ENCODE measurements at regions of chr9 and their contacts with region 1.

Region 1: DNA sequence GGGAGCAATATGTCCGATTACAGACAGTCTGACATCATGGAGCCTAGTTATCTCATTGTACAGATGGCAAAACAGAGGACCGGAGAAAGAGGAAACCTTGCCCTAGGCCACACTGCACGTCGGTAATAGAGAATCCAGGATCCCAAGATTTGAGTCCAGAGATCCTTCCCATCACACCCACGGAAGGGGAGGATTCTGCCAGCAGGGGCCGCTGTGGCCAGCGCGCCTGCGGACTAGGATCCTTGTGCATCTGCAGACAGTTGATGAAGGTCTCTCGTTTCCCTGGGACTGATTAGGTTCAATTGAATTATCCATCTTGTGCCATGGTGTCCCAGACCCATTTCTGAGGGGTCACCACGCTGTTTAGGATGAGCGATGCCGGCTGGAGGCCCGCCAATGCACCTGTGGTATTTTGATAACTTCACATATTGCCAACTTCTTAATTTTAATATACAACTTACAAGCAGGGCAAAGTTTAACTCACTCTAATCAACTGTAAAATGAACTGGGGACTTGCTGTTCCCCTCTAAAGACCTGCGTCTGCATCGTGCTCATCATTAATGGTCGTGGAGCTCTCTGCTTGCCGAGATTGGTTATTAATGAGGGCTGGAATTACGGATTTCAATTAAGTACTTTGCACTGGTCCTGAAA is 592.7 kb upstream of the BRINP1 start:
- DNase-seq: no peak
- H3K4me3 ChIP-seq: no peak overlapping the region
- CTCF ChIP-seq: peak; percentile 80

Region 2: DNA sequence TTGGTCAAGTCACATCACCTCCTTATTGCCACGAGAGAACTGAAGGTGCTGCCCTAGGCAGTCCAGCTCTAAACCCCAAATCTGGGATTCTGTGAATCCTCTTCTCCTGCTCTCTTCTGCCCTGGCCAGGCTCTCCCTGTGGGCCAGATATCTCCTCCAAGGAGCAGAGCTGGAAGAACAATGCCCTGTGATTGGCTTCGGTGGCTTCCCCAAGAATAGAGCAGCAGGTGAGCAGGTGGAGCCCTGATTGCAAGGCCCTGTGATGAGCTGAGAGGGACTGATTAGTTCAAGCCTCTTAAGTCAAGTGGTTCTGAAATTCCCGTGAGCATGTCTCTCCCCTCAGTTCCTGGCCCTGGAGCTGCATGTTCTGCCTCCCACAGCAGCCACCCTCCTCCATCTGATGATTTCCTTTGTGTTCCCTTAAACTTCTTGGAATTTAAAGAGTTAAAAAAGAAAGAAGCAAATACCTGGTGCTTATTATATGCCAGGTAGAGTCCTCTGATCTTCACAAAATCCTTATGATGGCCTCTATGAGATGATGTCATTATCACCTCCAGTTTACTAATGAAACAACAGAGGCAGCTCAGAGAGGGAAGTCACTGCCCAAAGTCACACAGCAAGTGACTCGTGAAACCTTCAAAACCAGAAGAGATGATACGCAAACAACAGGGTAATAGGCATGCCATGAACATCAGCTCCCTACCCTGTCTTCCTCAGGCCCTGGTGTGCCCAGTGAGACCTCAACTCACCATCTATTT is 417.2 kb before region 1 on chr9:
- CTCF ChIA-PET with region 1: no interaction called
- POLR2A ChIA-PET with region 1: no interaction called
- DNase-seq: no peak
- H3K4me3 ChIP-seq: no peak overlapping the region
- CTCF ChIP-seq: no peak

Region 3: DNA sequence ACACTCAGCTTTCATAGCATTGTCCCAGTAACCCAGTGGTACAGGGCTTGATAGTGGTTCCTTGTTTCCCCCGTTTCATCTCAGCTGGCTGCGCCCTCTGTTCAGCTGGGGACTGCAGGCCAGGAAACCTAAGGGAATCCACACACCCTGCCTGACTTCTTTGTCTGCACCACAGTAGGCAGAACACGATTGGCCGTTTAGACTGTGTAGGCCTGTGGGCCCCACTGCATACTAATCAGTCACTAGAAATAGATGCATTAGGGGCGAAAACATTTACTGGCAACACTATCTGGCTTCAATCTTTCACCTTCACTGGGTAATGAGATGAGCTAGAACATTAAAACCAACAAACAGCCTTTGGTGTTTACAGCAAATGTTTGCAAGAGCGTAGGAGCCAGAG is 80.0 kb before region 1 on chr9:
- CTCF ChIA-PET with region 1: no interaction called
- POLR2A ChIA-PET with region 1: no interaction called
- DNase-seq: no peak
- H3K4me3 ChIP-seq: no peak overlapping the region
- CTCF ChIP-seq: no peak

Region 4: GRCh38 chr9:119951090-119951489 is 10.8 kb before region 1 on chr9:
- CTCF ChIA-PET with region 1: interaction called, 22 read pairs
- POLR2A ChIA-PET with region 1: interaction called, 7 read pairs
- DNase-seq: peak; percentile 95
- H3K4me3 ChIP-seq: no peak overlapping the region
- CTCF ChIP-seq: no peak

Region 5: DNA sequence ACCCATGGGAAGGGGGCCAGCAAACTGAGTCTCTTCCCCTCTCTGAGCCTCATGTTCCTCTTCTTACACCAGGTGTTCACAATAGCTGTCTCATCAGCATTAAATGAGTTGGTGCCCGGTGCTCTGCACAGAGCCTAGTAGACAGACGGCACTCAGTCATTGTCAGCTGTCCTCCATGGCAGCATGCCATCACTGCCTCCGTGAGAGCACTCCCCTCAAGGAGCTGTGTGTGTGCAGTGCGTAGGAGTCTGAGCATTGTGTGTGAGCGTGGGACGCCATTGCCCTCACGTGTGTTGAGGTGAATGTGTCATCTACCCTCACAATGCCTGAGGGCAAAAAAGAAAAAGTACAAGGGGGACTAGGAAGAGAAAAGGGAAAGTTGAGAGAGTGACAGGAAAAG is 81.5 kb after region 1 on chr9:
- CTCF ChIA-PET with region 1: no interaction called
- POLR2A ChIA-PET with region 1: no interaction called
- DNase-seq: no peak
- H3K4me3 ChIP-seq: no peak overlapping the region
- CTCF ChIP-seq: no peak

Measured in AG04449 (cell line).